ENCODE measurements at regions of chr12 and their contacts with region 1.

Region 1: DNA sequence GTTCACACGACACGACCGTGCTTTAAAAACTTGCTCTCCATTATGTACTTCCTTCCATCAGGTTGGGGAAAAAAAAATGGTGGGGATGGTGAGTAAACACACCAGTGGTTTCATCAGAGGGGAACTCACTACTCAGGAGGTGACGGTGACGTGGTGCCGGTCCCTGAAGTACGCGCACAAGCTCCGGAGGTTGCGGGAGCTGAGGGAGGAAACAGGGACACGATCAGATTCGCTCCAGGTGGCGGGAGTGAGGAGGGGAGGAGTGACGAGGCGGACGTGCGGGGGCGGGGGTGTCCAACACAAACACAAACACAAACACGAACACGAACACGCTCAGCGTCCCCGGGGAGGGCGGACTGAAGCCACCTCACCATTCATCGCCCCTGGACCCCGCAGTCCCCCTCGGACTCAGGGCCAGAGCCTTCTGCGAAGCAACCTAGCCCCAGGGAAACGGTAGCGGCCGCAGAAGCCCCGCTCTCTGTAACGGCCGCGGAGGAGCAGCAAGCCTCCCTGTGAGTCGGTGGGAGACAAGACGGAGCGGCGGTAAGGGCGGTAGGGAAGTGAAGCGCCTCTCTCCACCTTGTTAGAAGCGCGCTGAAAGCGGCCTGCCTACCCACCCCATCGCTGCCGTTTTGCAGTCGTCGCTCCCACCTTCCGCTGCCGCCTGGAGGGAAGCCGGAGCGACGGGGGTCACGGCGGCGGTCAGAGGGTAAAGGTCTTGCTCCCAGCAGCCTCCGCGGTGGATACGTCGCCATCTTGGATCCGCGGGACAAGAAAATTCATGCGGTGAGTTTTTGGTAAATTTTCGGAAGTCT is at the start of gene CNOT2:
- DNase-seq: peak; percentile 96
- H3K4me3 Mint-ChIP-seq: peak within 1 kb of the TSS; percentile 94
- H3K27ac Mint-ChIP-seq: peak within 1 kb of the TSS; percentile 99
- H3K4me1 Mint-ChIP-seq: peaks cover 47% of the 10 kb centered on the region
- H3K27me3 Mint-ChIP-seq: no peaks in the 10 kb centered on the region
- total RNA-seq, gene CNOT2: 65.6 and 74.4 TPM in 2 replicates

Region 2: GRCh38 chr12:68958322-68958721 is 1284.6 kb before region 1 on chr12:
- intact Hi-C with region 1: loop called (anchors 5 kb)
- DNase-seq: peak; percentile 77
- H3K4me3 Mint-ChIP-seq: peak overlapping the region; percentile 56
- H3K27ac Mint-ChIP-seq: peak overlapping the region; percentile 93
- H3K4me1 Mint-ChIP-seq: peaks cover 50% of the 10 kb centered on the region
- H3K27me3 Mint-ChIP-seq: no peaks in the 10 kb centered on the region

Region 3: GRCh38 chr12:69359531-69360347 is 883.2 kb before region 1 on chr12 and contains the start of gene YEATS4:
- intact Hi-C with region 1: loop called (anchors 5 kb)
- DNase-seq: peak; percentile 96
- H3K4me3 Mint-ChIP-seq: peak within 1 kb of the TSS; percentile 93
- H3K27ac Mint-ChIP-seq: peak within 1 kb of the TSS; percentile 98
- H3K4me1 Mint-ChIP-seq: peaks cover 27% of the 10 kb centered on the region
- H3K27me3 Mint-ChIP-seq: peaks cover 7% of the 10 kb centered on the region
- total RNA-seq, gene YEATS4: 37.9 and 41.8 TPM in 2 replicates

Region 4: GRCh38 chr12:69738351-69739286 is 504.3 kb before region 1 on chr12 and contains the start of gene RAB3IP:
- intact Hi-C with region 1: loop called (anchors 1 kb)
- DNase-seq: peak; percentile 97
- H3K4me3 Mint-ChIP-seq: peak within 1 kb of the TSS; percentile 86
- H3K27ac Mint-ChIP-seq: peak within 1 kb of the TSS; percentile 76
- H3K4me1 Mint-ChIP-seq: peaks cover 15% of the 10 kb centered on the region
- H3K27me3 Mint-ChIP-seq: peaks cover 33% of the 10 kb centered on the region
- total RNA-seq, gene RAB3IP: 28.5 and 33.6 TPM in 2 replicates

Region 5: GRCh38 chr12:70365648-70366518 is 123.0 kb after region 1 on chr12 and contains the start of gene KCNMB4:
- intact Hi-C with region 1: loop called (anchors 1 kb)
- DNase-seq: peak; percentile 94
- H3K4me3 Mint-ChIP-seq: peak within 1 kb of the TSS; percentile 92
- H3K27ac Mint-ChIP-seq: peak within 1 kb of the TSS; percentile 58
- H3K4me1 Mint-ChIP-seq: peaks cover 17% of the 10 kb centered on the region
- H3K27me3 Mint-ChIP-seq: peaks cover 39% of the 10 kb centered on the region
- total RNA-seq, gene KCNMB4: 0.17 and 0.19 TPM in 2 replicates

Region 6: GRCh38 chr12:71840231-71840847 is 1597.4 kb after region 1 on chr12:
- intact Hi-C with region 1: loop called (anchors 5 kb)
- DNase-seq: peak; percentile 78
- H3K4me3 Mint-ChIP-seq: peak overlapping the region; percentile 98
- H3K27ac Mint-ChIP-seq: peak overlapping the region; percentile 94
- H3K4me1 Mint-ChIP-seq: peaks cover 34% of the 10 kb centered on the region
- H3K27me3 Mint-ChIP-seq: no peaks in the 10 kb centered on the region

Measured in activated CD4-positive, alpha-beta T cell treated with anti-CD3 and anti-CD28 coated beads, Interleukin-2, amount 10 ng/mL, durations not matched to agents 24 days and 14 days (primary cell).